ENCODE measurements at regions of chr12 and their contacts with region 1.

Region 1: GRCh38 chr12:96219698-96220206 is 25.6 kb downstream of the ELK3 start:
- DNase-seq: no peak
- H3K4me3 ChIP-seq: no peak overlapping the region
- H3K4me3 Mint-ChIP-seq: no peak overlapping the region
- H3K27ac ChIP-seq: no peak overlapping the region
- H3K27ac Mint-ChIP-seq: peak overlapping the region in 6 of 7 donors; percentile 10 to 82 (median 72)
- H3K4me1 ChIP-seq: peaks cover 8 to 10% of the 10 kb centered on the region in 2 donors
- H3K4me1 Mint-ChIP-seq: peaks cover 9% of the 10 kb centered on the region
- H3K27me3 ChIP-seq: no peaks in the 10 kb centered on the region
- H3K27me3 Mint-ChIP-seq: peaks cover 0 to 2% (median 0%) of the 10 kb centered on the region in 3 donors
- CTCF ChIP-seq: no peak

Region 2: GRCh38 chr12:94969424-94969823 is 1250.3 kb before region 1 on chr12:
- intact Hi-C with region 1: no loop called
- DNase-seq: no peak
- H3K4me3 ChIP-seq: no peak overlapping the region
- H3K4me3 Mint-ChIP-seq: no peak overlapping the region
- H3K27ac ChIP-seq: no peak overlapping the region
- H3K27ac Mint-ChIP-seq: no peak overlapping the region
- H3K4me1 ChIP-seq: no peaks in the 10 kb centered on the region
- H3K4me1 Mint-ChIP-seq: no peaks in the 10 kb centered on the region
- H3K27me3 ChIP-seq: no peaks in the 10 kb centered on the region
- H3K27me3 Mint-ChIP-seq: peaks cover 0 to 2% (median 0%) of the 10 kb centered on the region in 3 donors
- CTCF ChIP-seq: no peak

Region 3: GRCh38 chr12:96516472-96517430 is 297.0 kb after region 1 on chr12:
- intact Hi-C with region 1: loop called in 1 of 2 experiments (anchors 10 kb)
- DNase-seq: peak; percentile 60 to 83 (median 71)
- H3K4me3 ChIP-seq: no peak overlapping the region
- H3K4me3 Mint-ChIP-seq: no peak overlapping the region
- H3K27ac ChIP-seq: no peak overlapping the region
- H3K27ac Mint-ChIP-seq: no peak overlapping the region
- H3K4me1 ChIP-seq: no peaks in the 10 kb centered on the region
- H3K4me1 Mint-ChIP-seq: no peaks in the 10 kb centered on the region
- H3K27me3 ChIP-seq: no peaks in the 10 kb centered on the region
- H3K27me3 Mint-ChIP-seq: peaks cover 0 to 1% (median 0%) of the 10 kb centered on the region in 3 donors
- CTCF ChIP-seq: peak; percentile 85

Measured in CD14-positive monocyte (primary cell).